ENCODE measurements at regions of chr2 and their contacts with region 1.

Region 1: DNA sequence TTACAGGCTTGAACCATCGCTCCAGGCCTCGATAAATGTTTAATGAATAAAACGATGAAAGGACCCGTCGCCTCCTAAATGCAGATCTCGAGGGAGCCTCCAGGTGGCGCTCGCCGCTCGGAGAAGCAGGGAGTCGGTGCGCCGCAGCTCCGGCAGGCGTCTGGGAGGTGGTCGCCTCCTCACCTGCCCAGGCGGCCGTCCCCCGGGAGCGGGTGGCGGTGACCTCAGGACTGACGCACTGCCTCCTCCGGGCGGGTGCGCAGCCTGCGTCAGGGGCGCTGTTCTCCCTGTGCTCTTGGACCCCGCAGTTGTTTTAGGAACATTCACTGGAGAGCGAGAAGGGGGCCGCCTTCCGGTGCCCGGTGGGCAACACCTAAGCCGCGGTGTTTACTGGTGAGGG is 38.6 kb upstream of the POLE4 start:
- DNase-seq: peak; percentile 56 to 83 (median 76)
- ATAC-seq: peak; percentile 89
- H3K4me3 ChIP-seq: peak overlapping the region in 1 of 2 experiments; percentile 25
- H3K4me3 Mint-ChIP-seq: peak overlapping the region; percentile 64
- H3K27ac ChIP-seq: no peak overlapping the region
- H3K27ac Mint-ChIP-seq: no peak overlapping the region
- H3K4me1 ChIP-seq: no peaks in the 10 kb centered on the region
- H3K4me1 Mint-ChIP-seq: peaks cover 6% of the 10 kb centered on the region
- H3K27me3 ChIP-seq: no peaks in the 10 kb centered on the region
- H3K27me3 Mint-ChIP-seq: peaks cover 13% of the 10 kb centered on the region
- CTCF ChIP-seq: peak; percentile 85

Region 2: DNA sequence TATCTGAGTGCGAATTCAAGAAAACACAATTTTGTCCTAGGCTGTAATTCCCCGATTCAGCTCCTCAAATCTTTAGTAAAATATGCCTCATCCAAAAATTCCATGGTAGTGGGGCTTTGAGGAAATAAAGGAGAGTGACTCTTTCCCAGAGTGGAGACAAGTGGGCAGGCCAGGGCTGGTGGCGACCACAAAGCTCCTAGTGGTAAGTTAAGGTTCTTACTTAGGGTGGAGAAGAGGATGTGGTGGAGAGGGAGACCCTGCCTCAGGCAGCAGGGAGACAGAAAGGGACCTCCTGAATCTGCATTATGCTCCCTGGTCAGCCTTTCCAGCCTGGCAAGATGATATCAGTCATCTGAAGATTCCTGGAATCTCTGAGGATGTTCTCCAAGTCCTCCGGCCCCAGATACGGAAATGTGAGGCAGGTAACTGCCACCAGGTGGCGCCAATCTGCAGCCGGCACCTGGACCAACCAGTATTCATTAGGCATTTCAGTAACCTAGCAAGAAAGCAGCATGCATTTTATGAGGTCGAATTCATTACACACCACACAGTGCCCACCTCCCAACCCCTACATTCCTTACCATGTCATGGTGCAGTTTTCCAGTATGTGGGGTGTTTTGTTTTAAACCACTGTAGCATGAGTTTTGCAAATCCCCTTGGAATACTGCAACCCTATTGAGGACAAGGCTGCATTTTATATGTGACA is 145.0 kb after region 1 on chr2:
- CTCF ChIA-PET with region 1: interaction called, 3 read pairs
- POLR2A ChIA-PET with region 1: no interaction called
- intact Hi-C with region 1: loop called (anchors 2 to 5 kb)
- DNase-seq: peak; percentile 18 to 63 (median 43)
- ATAC-seq: no peak
- H3K4me3 ChIP-seq: no peak overlapping the region
- H3K4me3 Mint-ChIP-seq: no peak overlapping the region
- H3K27ac ChIP-seq: no peak overlapping the region
- H3K27ac Mint-ChIP-seq: no peak overlapping the region
- H3K4me1 ChIP-seq: no peaks in the 10 kb centered on the region
- H3K4me1 Mint-ChIP-seq: no peaks in the 10 kb centered on the region
- H3K27me3 ChIP-seq: no peaks in the 10 kb centered on the region
- H3K27me3 Mint-ChIP-seq: peaks cover 2% of the 10 kb centered on the region
- CTCF ChIP-seq: peak; percentile 67

Region 3: GRCh38 chr2:75466708-75467311 is 547.0 kb after region 1 on chr2:
- CTCF ChIA-PET with region 1: no interaction called
- POLR2A ChIA-PET with region 1: no interaction called
- intact Hi-C with region 1: loop called in 1 of 2 experiments (anchors 2 kb)
- DNase-seq: peak in 3 of 9 experiments; percentile 6 to 32 (median 13)
- ATAC-seq: no peak
- H3K4me3 ChIP-seq: no peak overlapping the region
- H3K4me3 Mint-ChIP-seq: no peak overlapping the region
- H3K27ac ChIP-seq: no peak overlapping the region
- H3K27ac Mint-ChIP-seq: no peak overlapping the region
- H3K4me1 ChIP-seq: no peaks in the 10 kb centered on the region
- H3K4me1 Mint-ChIP-seq: no peaks in the 10 kb centered on the region
- H3K27me3 ChIP-seq: no peaks in the 10 kb centered on the region
- H3K27me3 Mint-ChIP-seq: peaks cover 11% of the 10 kb centered on the region
- CTCF ChIP-seq: peak; percentile 44

Region 4: DNA sequence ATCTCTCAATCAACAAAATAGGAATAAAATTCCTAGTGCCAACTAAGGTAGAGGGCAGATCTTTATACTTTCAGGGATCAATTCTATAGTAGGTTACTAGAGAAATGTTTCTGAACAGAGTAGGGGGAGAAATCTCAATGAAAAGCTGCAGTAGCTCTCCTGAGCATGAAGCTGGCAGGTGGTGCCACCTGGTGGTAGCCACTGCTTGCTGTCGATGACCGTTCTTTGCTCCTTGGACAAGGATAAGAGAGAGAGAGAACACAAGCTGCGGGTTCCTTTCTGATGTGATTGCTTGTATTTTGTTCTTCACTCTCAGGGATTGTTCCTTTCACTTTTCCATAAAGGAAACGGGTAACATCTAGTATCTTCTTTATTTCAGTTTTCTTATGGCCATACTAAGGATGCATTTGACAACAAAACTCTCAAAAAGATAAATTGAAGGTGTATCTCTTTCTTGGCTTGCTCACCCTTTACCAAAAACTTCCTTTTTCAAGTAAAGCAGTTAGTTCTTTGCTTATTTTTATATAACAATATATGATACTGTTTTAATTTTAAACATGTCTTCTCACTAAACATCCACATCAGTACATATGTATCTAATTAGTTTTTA is 708.2 kb after region 1 on chr2:
- CTCF ChIA-PET with region 1: interaction called, 4 read pairs
- POLR2A ChIA-PET with region 1: no interaction called
- intact Hi-C with region 1: loop called (anchors 1 kb)
- DNase-seq: peak; percentile 24 to 69 (median 57)
- ATAC-seq: peak; percentile 49
- H3K4me3 ChIP-seq: no peak overlapping the region
- H3K4me3 Mint-ChIP-seq: no peak overlapping the region
- H3K27ac ChIP-seq: no peak overlapping the region
- H3K27ac Mint-ChIP-seq: no peak overlapping the region
- H3K4me1 ChIP-seq: no peaks in the 10 kb centered on the region
- H3K4me1 Mint-ChIP-seq: no peaks in the 10 kb centered on the region
- H3K27me3 ChIP-seq: no peaks in the 10 kb centered on the region
- H3K27me3 Mint-ChIP-seq: peaks cover 13% of the 10 kb centered on the region
- CTCF ChIP-seq: peak; percentile 86

Measured in CD8-positive, alpha-beta T cell (primary cell).